Ascending aorta (tissue), 2 donors: ENCODE measurements at regions of chr4 and their contacts with region 1.

Region 1: DNA sequence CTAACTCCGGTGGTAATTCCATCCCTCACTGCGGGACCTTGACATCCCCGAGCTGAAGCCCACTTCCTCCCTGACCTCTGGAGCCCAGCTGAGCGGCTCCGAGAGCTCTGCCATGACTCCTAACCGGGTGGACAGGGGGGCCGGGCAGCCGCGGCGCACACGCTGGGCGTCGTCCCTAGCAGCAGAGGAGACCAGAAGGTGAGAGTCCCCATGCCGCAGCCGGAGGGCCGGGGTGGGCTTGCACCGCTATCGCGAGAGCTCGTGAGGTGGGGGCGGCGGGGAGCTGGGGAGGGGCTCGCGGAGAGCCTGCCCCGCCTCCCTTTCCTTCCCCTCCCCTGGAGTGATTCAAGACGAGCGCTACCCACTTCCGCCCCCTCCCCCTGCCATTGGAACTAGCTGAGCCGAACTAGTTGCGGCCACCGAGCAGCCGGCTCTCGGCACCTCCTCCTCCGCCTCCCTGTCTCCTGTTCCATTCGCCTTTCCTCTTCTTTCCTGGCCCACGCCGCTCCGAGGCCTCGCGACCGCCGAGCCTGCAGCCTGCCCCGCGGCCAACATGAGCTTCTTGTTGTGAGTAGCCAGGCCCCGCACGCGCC is at the start of gene MOB1B:
- DNase-seq: peak; percentile 49 to 91
- H3K4me3 ChIP-seq: peak within 1 kb of the TSS; percentile 83 to 86
- H3K27ac ChIP-seq: peak within 1 kb of the TSS; percentile 77 to 85
- H3K4me1 ChIP-seq: no peaks in the 10 kb centered on the region
- H3K27me3 ChIP-seq: no peaks in the 10 kb centered on the region
- CTCF ChIP-seq: peak; percentile 24 to 57 (median 54)
- total RNA-seq, gene MOB1B: 2.6 TPM

Region 2: GRCh38 chr4:70452946-70453345 is 449.1 kb before region 1 on chr4:
- intact Hi-C with region 1: no loop called
- DNase-seq: no peak
- H3K4me3 ChIP-seq: no peak overlapping the region
- H3K27ac ChIP-seq: no peak overlapping the region
- H3K4me1 ChIP-seq: no peaks in the 10 kb centered on the region
- H3K27me3 ChIP-seq: no peaks in the 10 kb centered on the region
- CTCF ChIP-seq: no peak

Region 3: GRCh38 chr4:70958681-70959080 is 56.6 kb after region 1 on chr4:
- intact Hi-C with region 1: loop called (anchors 5 kb)
- DNase-seq: no peak
- H3K4me3 ChIP-seq: no peak overlapping the region
- H3K27ac ChIP-seq: no peak overlapping the region
- H3K4me1 ChIP-seq: peaks cover 0 to 6% of the 10 kb centered on the region in 2 donors
- H3K27me3 ChIP-seq: no peaks in the 10 kb centered on the region
- CTCF ChIP-seq: no peak

Region 4: GRCh38 chr4:70993181-70994068 is 91.3 kb after region 1 on chr4 and contains the start of gene DCK:
- intact Hi-C with region 1: loop called (anchors 1 kb)
- DNase-seq: peak; percentile 61 to 95
- H3K4me3 ChIP-seq: peak within 1 kb of the TSS; percentile 73 to 75
- H3K27ac ChIP-seq: peak within 1 kb of the TSS; percentile 76 to 86
- H3K4me1 ChIP-seq: peaks cover 6% of the 10 kb centered on the region in 2 donors
- H3K27me3 ChIP-seq: no peaks in the 10 kb centered on the region
- CTCF ChIP-seq: no peak
- total RNA-seq, gene DCK: 24.5 TPM